ENCODE measurements at regions of chr6 and their contacts with region 1.

Region 1: GRCh38 chr6:157034436-157035230 is 257.5 kb downstream of the ARID1B start:
- DNase-seq: no peak
- ATAC-seq: peak; percentile 68
- H3K4me3 Mint-ChIP-seq: peak overlapping the region; percentile 43
- H3K27ac Mint-ChIP-seq: peak overlapping the region; percentile 54
- H3K4me1 Mint-ChIP-seq: peaks cover 16% of the 10 kb centered on the region
- H3K27me3 Mint-ChIP-seq: no peaks in the 10 kb centered on the region

Region 2: GRCh38 chr6:157045831-157046454 is 11.3 kb after region 1 on chr6:
- CTCF ChIA-PET with region 1: interaction called, 13 read pairs
- DNase-seq: no peak
- ATAC-seq: no peak
- H3K4me3 Mint-ChIP-seq: no peak overlapping the region
- H3K27ac Mint-ChIP-seq: no peak overlapping the region
- H3K4me1 Mint-ChIP-seq: no peaks in the 10 kb centered on the region
- H3K27me3 Mint-ChIP-seq: no peaks in the 10 kb centered on the region

Region 3: DNA sequence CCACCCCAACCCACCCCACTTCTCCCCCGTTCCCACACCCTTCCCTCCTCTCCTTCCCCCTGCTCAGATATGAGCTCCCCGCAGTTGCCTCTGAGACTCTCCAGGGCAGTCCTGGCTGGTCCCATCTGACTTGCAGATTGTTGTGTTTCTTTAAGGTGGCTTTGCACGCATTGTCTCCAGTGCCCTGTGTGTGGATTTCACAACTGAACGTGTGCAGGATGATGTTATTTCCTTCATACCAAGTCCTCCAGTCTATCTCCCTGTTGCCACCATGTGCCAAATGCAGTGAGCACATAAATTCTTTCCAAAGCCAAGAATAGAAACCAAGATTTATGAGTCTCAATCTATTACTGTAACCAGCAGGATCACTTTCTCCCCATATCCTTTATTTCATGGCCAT is 209.5 kb after region 1 on chr6:
- CTCF ChIA-PET with region 1: no interaction called
- DNase-seq: no peak
- ATAC-seq: no peak
- H3K4me3 Mint-ChIP-seq: no peak overlapping the region
- H3K27ac Mint-ChIP-seq: no peak overlapping the region
- H3K4me1 Mint-ChIP-seq: peaks cover 7% of the 10 kb centered on the region
- H3K27me3 Mint-ChIP-seq: peaks cover 37% of the 10 kb centered on the region

Measured in activated CD8-positive, alpha-beta memory T cell treated with anti-CD3 and anti-CD28 coated beads, Interleukin-2, amount 10 ng/mL, durations not matched to agents 7 days and 5 days (primary cell).